MCF 10A (cell line): ENCODE measurements at regions of chr10 and their contacts with region 1.

Region 1: GRCh38 chr10:133438711-133439273 is 14.4 kb upstream of the SPRN start:
- DNase-seq: peak; percentile 24
- H3K4me3 Mint-ChIP-seq: no peak overlapping the region
- H3K27ac Mint-ChIP-seq: no peak overlapping the region
- H3K4me1 Mint-ChIP-seq: no peaks in the 10 kb centered on the region
- H3K27me3 Mint-ChIP-seq: no peaks in the 10 kb centered on the region
- CTCF ChIP-seq: peak; percentile 28

Region 2: DNA sequence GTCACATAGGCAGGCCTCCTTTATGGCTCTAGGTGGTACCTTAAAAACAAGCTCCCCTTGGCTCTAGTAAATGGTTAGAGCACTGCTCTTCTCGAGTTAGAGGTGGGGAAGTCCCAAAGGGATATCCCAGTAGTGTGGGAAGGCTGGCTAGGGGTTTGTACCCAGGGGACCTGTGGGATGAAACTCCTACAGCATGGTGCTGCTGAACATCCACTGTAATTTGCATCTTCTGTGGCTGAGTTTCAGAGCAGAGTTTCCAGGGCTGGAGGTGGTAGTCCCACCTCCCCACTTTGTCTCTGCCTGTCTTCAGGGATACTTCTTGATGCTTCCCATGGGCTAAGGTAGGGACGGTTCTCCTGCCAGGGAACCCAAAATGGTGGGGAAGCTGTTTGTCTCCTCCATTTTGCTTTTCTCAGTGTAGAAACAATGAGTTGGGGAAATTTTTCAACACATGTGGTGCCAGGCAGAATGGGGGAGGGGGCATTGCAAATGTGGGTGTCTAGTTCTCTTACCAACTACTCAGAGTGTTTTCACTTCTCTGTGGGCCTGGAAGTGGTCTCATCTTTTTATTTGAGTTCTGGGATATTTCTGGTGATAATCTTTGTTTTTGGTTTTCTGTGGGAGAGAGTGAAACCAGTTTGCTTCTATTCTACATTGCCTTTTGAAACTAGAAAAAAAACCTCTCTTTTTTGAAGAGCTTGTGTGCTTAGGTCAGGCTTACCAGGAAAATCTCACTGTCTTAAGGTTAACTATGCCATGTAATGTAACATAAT is 51.2 kb after region 1 on chr10:
- CTCF ChIA-PET with region 1: interaction called, 4 read pairs
- POLR2A ChIA-PET with region 1: no interaction called
- intact Hi-C with region 1: loop called (anchors 5 kb)
- DNase-seq: no peak
- H3K4me3 Mint-ChIP-seq: no peak overlapping the region
- H3K27ac Mint-ChIP-seq: no peak overlapping the region
- H3K4me1 Mint-ChIP-seq: no peaks in the 10 kb centered on the region
- H3K27me3 Mint-ChIP-seq: no peaks in the 10 kb centered on the region
- CTCF ChIP-seq: no peak

Region 3: DNA sequence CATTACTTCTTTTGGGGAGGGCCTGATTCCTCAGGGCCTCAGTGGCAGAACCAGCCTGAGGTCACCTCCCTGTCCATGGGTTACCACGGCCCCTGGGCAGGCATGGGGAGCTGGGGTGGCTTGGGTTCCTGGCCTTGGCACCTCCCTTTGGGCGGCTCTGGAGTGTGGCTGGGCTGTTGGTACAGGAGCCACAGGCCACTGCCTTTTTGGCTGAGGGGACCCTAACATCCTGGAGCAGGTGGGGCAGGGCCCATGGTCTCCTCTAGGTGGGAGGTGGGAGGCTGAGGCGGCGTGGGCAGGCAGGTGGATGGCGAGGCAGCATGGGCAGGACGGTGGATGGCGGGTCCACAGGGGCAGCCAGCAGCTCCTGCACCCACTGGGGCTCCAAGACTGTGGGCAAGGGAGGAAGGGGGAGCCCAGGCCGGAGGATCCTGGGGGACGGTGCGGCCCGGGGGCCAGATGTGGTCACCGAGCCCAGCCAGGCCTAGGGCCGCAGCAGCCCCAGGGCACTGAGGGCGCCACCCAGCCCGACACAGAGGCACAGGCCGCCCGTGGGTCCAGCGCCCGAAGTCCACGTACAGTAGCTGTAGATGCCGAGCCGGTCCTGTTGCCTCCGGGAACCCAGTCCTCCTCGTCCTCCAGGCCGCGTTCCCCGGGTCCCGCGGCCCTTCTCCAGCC is 129.0 kb after region 1 on chr10:
- CTCF ChIA-PET with region 1: interaction called, 12 read pairs
- POLR2A ChIA-PET with region 1: no interaction called
- intact Hi-C with region 1: no loop called
- DNase-seq: no peak
- H3K4me3 Mint-ChIP-seq: no peak overlapping the region
- H3K27ac Mint-ChIP-seq: no peak overlapping the region
- H3K4me1 Mint-ChIP-seq: no peaks in the 10 kb centered on the region
- H3K27me3 Mint-ChIP-seq: no peaks in the 10 kb centered on the region
- CTCF ChIP-seq: no peak

Region 4: GRCh38 chr10:133608855-133609254 is 170.1 kb after region 1 on chr10:
- CTCF ChIA-PET with region 1: interaction called, 24 read pairs
- POLR2A ChIA-PET with region 1: interaction called, 3 read pairs
- intact Hi-C with region 1: loop called (anchors 5 kb)
- DNase-seq: peak; percentile 38
- H3K4me3 Mint-ChIP-seq: no peak overlapping the region
- H3K27ac Mint-ChIP-seq: no peak overlapping the region
- H3K4me1 Mint-ChIP-seq: peaks cover 4% of the 10 kb centered on the region
- H3K27me3 Mint-ChIP-seq: peaks cover 88% of the 10 kb centered on the region
- CTCF ChIP-seq: no peak